ENCODE measurements at regions of chr3 and their contacts with region 1.

Region 1: DNA sequence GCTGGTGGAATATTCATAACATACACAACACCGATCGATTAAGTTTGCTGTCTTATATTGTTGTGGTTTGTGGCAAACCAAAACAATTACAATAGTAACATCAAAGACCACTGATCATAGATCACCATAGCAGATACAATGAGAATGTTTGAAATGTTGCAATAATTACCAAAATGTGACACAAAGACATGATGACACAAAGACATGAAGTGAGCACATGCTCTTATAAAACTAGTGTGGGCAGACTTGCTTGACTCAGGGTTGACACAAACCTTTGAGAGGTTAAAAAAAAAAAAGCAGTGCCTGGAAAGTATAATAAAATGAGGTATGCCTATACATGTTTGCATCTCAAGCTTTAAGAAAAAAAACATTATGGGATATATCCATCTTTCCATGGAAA is 130.3 kb downstream of the NR1I2 start:
- DNase-seq: no peak
- H3K4me3 Mint-ChIP-seq: no peak overlapping the region
- H3K27ac Mint-ChIP-seq: peak overlapping the region; percentile 69
- H3K4me1 Mint-ChIP-seq: peaks cover 24% of the 10 kb centered on the region
- H3K27me3 Mint-ChIP-seq: no peaks in the 10 kb centered on the region

Region 2: DNA sequence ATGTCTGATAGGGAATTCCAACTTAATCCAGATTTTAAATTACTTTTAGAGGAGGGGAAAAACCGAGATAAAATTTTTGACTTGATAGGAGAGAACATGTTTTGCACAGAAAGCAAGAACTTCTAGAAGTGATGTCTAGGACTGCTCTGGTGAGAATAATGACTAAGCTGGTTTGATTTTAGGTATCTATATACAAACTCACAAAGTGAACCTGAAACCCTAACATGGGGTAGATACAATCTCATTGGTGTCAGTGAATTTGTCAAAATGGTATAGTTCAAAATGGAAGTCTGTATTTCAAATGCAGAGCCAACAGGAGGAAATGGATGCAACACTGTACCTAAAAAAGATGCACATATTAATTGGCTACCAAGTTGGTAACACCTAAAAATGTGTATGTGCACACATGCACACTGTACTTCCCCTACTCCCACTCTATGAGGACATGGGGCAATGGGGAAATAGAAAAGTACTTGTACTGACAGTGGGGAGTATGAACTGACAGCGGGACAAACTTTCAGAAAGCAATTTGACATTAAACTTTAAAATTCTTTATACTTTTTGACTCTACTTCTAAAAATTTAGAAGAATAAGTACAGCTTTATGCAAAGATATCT is 77.4 kb before region 1 on chr3:
- CTCF ChIA-PET with region 1: no interaction called
- POLR2A ChIA-PET with region 1: no interaction called
- intact Hi-C with region 1: loop called (anchors 1 kb)
- DNase-seq: no peak
- H3K4me3 Mint-ChIP-seq: no peak overlapping the region
- H3K27ac Mint-ChIP-seq: no peak overlapping the region
- H3K4me1 Mint-ChIP-seq: peaks cover 10% of the 10 kb centered on the region
- H3K27me3 Mint-ChIP-seq: no peaks in the 10 kb centered on the region

Region 3: GRCh38 chr3:119891944-119892721 is 20.1 kb before region 1 on chr3:
- CTCF ChIA-PET with region 1: interaction called, 4 read pairs
- POLR2A ChIA-PET with region 1: no interaction called
- intact Hi-C with region 1: loop called (anchors 1 kb)
- DNase-seq: peak; percentile 35
- H3K4me3 Mint-ChIP-seq: no peak overlapping the region
- H3K27ac Mint-ChIP-seq: no peak overlapping the region
- H3K4me1 Mint-ChIP-seq: peaks cover 13% of the 10 kb centered on the region
- H3K27me3 Mint-ChIP-seq: no peaks in the 10 kb centered on the region

Region 4: DNA sequence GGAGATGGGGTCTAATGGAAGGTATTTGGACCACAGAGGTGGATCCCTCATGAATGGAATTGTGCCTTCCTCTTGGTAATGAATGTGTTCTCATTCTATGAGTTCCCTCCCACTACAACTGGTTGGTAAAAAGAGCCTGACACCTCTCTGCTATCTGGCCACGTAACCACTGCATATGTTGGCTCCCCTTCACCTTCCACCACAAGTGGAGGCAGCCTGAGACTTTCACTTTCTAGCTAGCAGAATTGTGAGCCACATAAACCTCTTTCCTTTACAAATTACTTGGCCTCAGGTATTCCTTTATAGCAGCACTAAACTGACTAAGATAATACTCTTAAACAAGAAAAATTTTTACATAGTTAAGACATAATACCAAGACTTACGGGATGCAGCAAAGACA is 25.0 kb after region 1 on chr3:
- CTCF ChIA-PET with region 1: interaction called, 4 read pairs
- POLR2A ChIA-PET with region 1: interaction called, 3 read pairs
- intact Hi-C with region 1: loop called (anchors 1 kb)
- DNase-seq: peak; percentile 72
- H3K4me3 Mint-ChIP-seq: no peak overlapping the region
- H3K27ac Mint-ChIP-seq: peak overlapping the region; percentile 44
- H3K4me1 Mint-ChIP-seq: peaks cover 34% of the 10 kb centered on the region
- H3K27me3 Mint-ChIP-seq: no peaks in the 10 kb centered on the region

Region 5: GRCh38 chr3:119973289-119973688 is 61.1 kb after region 1 on chr3:
- CTCF ChIA-PET with region 1: no interaction called
- POLR2A ChIA-PET with region 1: no interaction called
- intact Hi-C with region 1: no loop called
- DNase-seq: no peak
- H3K4me3 Mint-ChIP-seq: no peak overlapping the region
- H3K27ac Mint-ChIP-seq: no peak overlapping the region
- H3K4me1 Mint-ChIP-seq: peaks cover 22% of the 10 kb centered on the region
- H3K27me3 Mint-ChIP-seq: no peaks in the 10 kb centered on the region

Region 6: DNA sequence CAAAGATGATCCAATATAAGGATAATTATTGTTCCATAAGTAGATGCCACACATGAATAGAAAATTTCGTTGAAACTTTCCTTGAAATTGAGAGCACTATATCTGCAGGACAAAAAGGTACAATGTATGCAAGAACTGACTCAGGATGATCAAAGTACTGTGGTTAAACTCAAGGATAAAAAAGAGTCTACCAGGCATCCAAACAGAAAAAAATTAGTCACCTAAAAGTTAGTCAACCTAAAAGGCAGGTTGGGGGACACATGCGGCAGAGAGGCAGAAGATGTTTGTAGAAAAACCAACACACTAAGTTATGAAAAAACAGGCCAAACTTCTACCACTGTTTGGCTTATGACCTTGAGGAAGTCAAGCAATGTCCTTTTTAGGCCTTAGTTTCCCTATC is 113.3 kb after region 1 on chr3:
- CTCF ChIA-PET with region 1: no interaction called
- POLR2A ChIA-PET with region 1: no interaction called
- intact Hi-C with region 1: loop called (anchors 1 kb)
- DNase-seq: peak; percentile 18
- H3K4me3 Mint-ChIP-seq: no peak overlapping the region
- H3K27ac Mint-ChIP-seq: no peak overlapping the region
- H3K4me1 Mint-ChIP-seq: peaks cover 65% of the 10 kb centered on the region
- H3K27me3 Mint-ChIP-seq: no peaks in the 10 kb centered on the region

Region 7: GRCh38 chr3:120147072-120147871 is 235.1 kb after region 1 on chr3:
- CTCF ChIA-PET with region 1: interaction called, 3 read pairs
- POLR2A ChIA-PET with region 1: no interaction called
- intact Hi-C with region 1: loop called (anchors 5 kb)
- DNase-seq: peak; percentile 53
- H3K4me3 Mint-ChIP-seq: no peak overlapping the region
- H3K27ac Mint-ChIP-seq: no peak overlapping the region
- H3K4me1 Mint-ChIP-seq: peaks cover 18% of the 10 kb centered on the region
- H3K27me3 Mint-ChIP-seq: no peaks in the 10 kb centered on the region